ENCODE measurements at regions of chr9 and their contacts with region 1.

Region 1: DNA sequence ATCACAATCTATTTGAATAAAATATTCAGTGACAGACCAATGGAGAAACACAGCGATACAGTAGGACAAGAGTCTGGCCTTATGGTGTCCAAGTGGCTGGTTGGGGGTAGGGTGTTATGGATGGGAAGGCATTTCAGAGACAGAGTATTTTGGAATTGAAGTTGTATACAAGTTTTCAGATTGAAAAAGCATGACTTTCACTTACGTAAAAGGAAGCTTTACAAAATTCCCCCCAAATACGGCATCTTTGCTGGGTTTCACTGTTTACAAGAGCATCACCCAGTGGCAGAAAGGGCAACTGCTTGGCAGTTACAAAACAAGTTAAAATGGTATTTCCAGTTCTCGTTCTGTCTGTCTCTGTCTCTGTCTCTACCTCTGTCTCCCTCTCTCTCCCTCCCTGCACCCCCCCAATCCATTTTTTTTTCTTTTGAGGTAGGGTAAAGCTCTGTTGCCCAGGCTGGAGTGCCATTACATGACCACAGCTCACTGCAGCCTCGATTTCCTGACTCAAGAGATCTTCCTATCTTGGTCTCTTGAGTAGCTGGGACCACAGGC is 86.2 kb downstream of the PTPN3 start:
- DNase-seq: peak; percentile 63
- H3K4me3 Mint-ChIP-seq: no peak overlapping the region
- H3K27ac Mint-ChIP-seq: peak overlapping the region; percentile 77
- H3K4me1 Mint-ChIP-seq: peaks cover 36% of the 10 kb centered on the region
- H3K27me3 Mint-ChIP-seq: peaks cover 21% of the 10 kb centered on the region

Region 2: GRCh38 chr9:109012876-109013678 is 398.8 kb before region 1 on chr9 and contains the start of gene CTNNAL1:
- CTCF ChIA-PET with region 1: no interaction called
- POLR2A ChIA-PET with region 1: no interaction called
- intact Hi-C with region 1: loop called (anchors 5 kb)
- DNase-seq: peak; percentile 91
- H3K4me3 Mint-ChIP-seq: peak within 1 kb of the TSS; percentile 86
- H3K27ac Mint-ChIP-seq: peak within 1 kb of the TSS; percentile 68
- H3K4me1 Mint-ChIP-seq: peaks cover 25% of the 10 kb centered on the region
- H3K27me3 Mint-ChIP-seq: peaks cover 2% of the 10 kb centered on the region
- total RNA-seq, gene CTNNAL1: 23.2 to 25.9 TPM

Region 3: GRCh38 chr9:109244157-109245132 is 167.4 kb before region 1 on chr9:
- CTCF ChIA-PET with region 1: interaction called, 3 read pairs
- POLR2A ChIA-PET with region 1: no interaction called
- intact Hi-C with region 1: loop called (anchors 1 kb)
- DNase-seq: peak; percentile 77
- H3K4me3 Mint-ChIP-seq: no peak overlapping the region
- H3K27ac Mint-ChIP-seq: no peak overlapping the region
- H3K4me1 Mint-ChIP-seq: peaks cover 2% of the 10 kb centered on the region
- H3K27me3 Mint-ChIP-seq: peaks cover 22% of the 10 kb centered on the region

Region 4: GRCh38 chr9:109440797-109441287 is 29.0 kb after region 1 on chr9:
- CTCF ChIA-PET with region 1: interaction called, 3 read pairs
- POLR2A ChIA-PET with region 1: no interaction called
- intact Hi-C with region 1: loop called (anchors 1 kb)
- DNase-seq: peak; percentile 63
- H3K4me3 Mint-ChIP-seq: no peak overlapping the region
- H3K27ac Mint-ChIP-seq: no peak overlapping the region
- H3K4me1 Mint-ChIP-seq: peaks cover 15% of the 10 kb centered on the region
- H3K27me3 Mint-ChIP-seq: peaks cover 8% of the 10 kb centered on the region

Region 5: DNA sequence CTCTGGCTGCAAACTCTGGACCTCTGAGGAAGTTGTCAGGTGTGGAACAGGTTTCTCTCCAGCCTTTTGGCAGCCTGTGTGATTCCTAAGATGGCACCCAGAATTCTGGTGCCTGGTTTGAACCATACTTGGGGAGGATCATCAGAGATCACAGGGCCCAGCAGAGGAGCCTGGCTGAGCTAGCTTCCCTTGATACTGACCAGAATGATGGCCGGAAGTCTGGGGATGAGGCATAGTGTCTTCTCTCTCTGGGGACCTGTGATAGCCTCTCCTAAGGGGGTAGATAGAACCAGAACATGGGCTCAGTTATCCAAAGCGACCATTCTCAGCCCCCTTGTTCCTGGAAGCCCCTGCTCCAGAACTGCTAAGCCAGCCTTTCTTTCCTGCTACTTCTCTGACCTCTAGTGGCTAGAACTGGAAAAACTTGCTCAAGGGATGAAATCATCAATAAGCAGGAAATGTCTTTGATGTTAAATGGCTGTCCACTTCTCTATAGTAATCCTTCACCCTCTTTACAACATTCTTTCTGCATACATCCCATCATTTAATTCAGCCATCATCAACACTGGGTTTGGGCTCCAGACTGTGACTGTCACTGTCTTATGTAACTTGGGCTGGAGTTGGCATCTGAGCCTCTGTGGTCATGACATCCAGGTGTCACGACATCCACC is 741.0 kb after region 1 on chr9:
- CTCF ChIA-PET with region 1: no interaction called
- POLR2A ChIA-PET with region 1: no interaction called
- intact Hi-C with region 1: loop called (anchors 1 kb)
- DNase-seq: no peak
- H3K4me3 Mint-ChIP-seq: no peak overlapping the region
- H3K27ac Mint-ChIP-seq: no peak overlapping the region
- H3K4me1 Mint-ChIP-seq: peaks cover 56% of the 10 kb centered on the region
- H3K27me3 Mint-ChIP-seq: no peaks in the 10 kb centered on the region

Measured in activated CD4-positive, alpha-beta memory T cell treated with anti-CD3 and anti-CD28 coated beads for 36 hours (primary cell).